Mammary epithelial cell (primary cell): ENCODE measurements at regions of chrX and their contacts with region 1.

Region 1: GRCh38 chrX:135185795-135186443 is 14.7 kb upstream of the CT55 start:
- DNase-seq: peak; percentile 53
- H3K4me3 ChIP-seq: no peak overlapping the region
- H3K27ac ChIP-seq: no peak overlapping the region
- H3K4me1 ChIP-seq: no peaks in the 10 kb centered on the region
- H3K27me3 ChIP-seq: no peaks in the 10 kb centered on the region
- CTCF ChIP-seq: peak; percentile 42 to 73

Region 2: DNA sequence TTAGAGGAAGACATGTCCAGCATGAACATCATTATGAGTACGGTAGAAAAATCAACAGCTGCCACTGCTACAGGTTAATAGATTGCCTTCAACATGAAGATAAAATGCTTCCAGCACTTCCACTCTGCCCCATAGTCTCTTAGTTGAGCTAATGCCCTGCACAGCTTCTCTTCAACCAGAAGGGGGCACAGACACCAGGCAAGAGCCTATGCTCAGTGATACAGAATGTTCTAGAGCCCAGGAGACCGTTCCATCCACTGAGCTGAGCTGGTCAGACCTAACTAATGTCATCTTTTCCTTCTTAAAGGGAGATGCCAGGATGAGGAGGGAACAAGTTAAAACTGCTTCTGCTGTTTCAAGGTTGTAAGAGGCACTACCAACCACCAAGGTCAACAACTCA is 278.0 kb after region 1 on chrX:
- CTCF ChIA-PET with region 1: no interaction called
- dilution Hi-C with region 1: no loop called
- in situ Hi-C with region 1: loop called in 1 of 2 experiments (anchors 25 kb)
- intact Hi-C with region 1: no loop called
- DNase-seq: no peak
- H3K4me3 ChIP-seq: no peak overlapping the region
- H3K27ac ChIP-seq: no peak overlapping the region
- H3K4me1 ChIP-seq: no peaks in the 10 kb centered on the region
- H3K27me3 ChIP-seq: no peaks in the 10 kb centered on the region
- CTCF ChIP-seq: peak; percentile 31 to 37